ENCODE measurements at regions of chr5 and their contacts with region 1.

Region 1: DNA sequence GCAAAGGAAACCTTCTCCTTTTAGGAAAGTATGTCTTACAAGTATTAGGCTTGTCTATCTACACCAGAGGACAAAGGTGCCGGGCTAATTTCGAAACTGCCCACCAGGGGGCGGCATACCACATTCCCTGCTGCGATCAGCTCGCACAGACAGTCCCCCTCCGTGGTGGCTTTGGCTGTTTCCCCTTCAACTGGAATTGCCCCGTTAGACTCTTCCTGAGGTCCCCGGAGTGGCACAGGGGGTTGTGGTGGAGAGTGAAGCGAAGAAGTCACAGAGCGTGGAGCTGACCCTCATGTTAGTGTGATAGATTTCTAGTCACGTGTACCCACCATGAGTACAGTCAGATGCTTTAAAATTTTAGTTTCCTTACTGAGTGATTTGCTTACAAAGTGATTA is 17.5 kb downstream of the PTTG1 start:
- DNase-seq: peak; percentile 86 to 90 (median 87)
- H3K4me3 ChIP-seq: peak overlapping the region; percentile 5 to 94 (median 71)
- H3K27ac ChIP-seq: peak overlapping the region; percentile 18 to 55
- H3K4me1 ChIP-seq: peaks cover 10 to 34% (median 31%) of the 10 kb centered on the region in 4 experiments
- H3K27me3 ChIP-seq: no peaks in the 10 kb centered on the region

Region 2: DNA sequence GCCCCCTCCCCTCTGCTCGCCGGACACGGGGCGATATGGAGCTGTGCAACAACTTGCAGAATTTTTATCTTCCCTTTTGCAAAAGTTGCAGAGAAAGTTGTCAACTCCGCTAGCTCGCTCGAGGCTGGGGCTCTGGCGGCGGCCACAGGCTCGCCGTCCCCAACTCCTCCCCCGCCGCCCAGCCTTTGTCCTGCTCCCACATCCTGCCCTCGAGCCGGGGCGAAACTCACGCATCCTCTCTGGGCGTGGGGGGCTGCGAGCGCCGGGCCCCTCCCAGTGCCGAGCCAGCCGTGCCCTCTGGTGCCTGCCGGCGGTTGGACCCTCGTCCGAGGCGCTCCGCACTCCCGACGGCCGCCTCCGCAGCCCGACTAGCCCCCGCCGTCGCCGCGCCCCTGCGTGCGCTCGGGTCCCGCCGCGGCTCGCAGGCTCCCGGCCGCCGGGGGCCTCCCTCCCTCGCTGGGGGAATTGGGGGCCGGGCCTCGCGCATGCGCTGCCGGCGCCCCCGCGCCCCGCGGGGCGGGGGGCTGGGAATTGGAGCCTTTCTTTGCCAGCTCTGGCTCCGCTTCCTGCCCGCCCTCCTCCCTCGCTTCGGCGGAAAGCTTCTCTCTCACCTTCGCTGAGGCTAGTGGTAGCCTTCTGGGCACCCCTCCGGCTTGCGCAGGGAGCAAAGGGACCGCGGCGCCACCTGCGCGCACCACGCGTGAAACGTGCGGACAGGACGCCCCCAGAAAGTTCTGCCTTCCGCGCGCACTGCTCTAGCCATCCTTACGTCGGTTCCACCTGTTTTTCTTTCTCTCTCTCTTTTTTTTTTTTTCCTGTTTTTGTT is 126.9 kb before region 1 on chr5 and contains the start of gene CCNJL:
- CTCF ChIA-PET with region 1: no interaction called
- POLR2A ChIA-PET with region 1: no interaction called
- DNase-seq: peak; percentile 19 to 57 (median 49)
- H3K4me3 ChIP-seq: peak within 1 kb of the TSS; percentile 49 to 78 (median 67)
- H3K27ac ChIP-seq: no peak within 1 kb of the TSS
- H3K4me1 ChIP-seq: peaks cover 7 to 38% (median 19%) of the 10 kb centered on the region in 4 experiments
- H3K27me3 ChIP-seq: peaks cover 0 to 55% (median 21%) of the 10 kb centered on the region in 5 experiments

Region 3: GRCh38 chr5:160418561-160419457 is 20.4 kb before region 1 on chr5 and contains the start of gene SLU7:
- CTCF ChIA-PET with region 1: interaction called, 39 read pairs
- POLR2A ChIA-PET with region 1: no interaction called
- DNase-seq: peak; percentile 98 to 99 (median 99)
- H3K4me3 ChIP-seq: peak within 1 kb of the TSS; percentile 65 to 99 (median 96)
- H3K27ac ChIP-seq: peak within 1 kb of the TSS; percentile 95 to 98
- H3K4me1 ChIP-seq: peaks cover 26 to 54% (median 44%) of the 10 kb centered on the region in 4 experiments
- H3K27me3 ChIP-seq: no peaks in the 10 kb centered on the region

Region 4: DNA sequence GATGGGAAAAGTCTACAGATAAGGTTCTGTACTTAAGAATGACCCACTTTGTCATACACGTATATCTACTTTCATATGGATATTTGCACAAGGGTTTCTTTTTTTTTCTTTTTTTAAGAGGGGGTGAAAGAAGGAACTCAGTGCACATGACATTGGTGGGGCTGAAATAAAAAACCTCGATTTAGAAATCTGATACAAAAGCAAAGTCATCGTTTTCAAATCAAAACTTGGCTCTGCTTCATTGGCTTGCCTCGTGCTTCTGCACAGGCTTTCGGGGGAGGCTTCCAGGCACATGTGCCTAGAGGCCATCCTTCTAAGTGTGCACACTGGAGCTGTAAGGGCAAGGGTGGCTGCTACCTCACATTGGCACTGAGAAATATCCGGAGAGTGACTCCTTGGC is 13.6 kb after region 1 on chr5:
- CTCF ChIA-PET with region 1: interaction called, 75 read pairs
- POLR2A ChIA-PET with region 1: no interaction called
- DNase-seq: no peak
- H3K4me3 ChIP-seq: no peak overlapping the region
- H3K27ac ChIP-seq: no peak overlapping the region
- H3K4me1 ChIP-seq: peaks cover 3 to 30% (median 21%) of the 10 kb centered on the region in 4 experiments
- H3K27me3 ChIP-seq: no peaks in the 10 kb centered on the region

Region 5: DNA sequence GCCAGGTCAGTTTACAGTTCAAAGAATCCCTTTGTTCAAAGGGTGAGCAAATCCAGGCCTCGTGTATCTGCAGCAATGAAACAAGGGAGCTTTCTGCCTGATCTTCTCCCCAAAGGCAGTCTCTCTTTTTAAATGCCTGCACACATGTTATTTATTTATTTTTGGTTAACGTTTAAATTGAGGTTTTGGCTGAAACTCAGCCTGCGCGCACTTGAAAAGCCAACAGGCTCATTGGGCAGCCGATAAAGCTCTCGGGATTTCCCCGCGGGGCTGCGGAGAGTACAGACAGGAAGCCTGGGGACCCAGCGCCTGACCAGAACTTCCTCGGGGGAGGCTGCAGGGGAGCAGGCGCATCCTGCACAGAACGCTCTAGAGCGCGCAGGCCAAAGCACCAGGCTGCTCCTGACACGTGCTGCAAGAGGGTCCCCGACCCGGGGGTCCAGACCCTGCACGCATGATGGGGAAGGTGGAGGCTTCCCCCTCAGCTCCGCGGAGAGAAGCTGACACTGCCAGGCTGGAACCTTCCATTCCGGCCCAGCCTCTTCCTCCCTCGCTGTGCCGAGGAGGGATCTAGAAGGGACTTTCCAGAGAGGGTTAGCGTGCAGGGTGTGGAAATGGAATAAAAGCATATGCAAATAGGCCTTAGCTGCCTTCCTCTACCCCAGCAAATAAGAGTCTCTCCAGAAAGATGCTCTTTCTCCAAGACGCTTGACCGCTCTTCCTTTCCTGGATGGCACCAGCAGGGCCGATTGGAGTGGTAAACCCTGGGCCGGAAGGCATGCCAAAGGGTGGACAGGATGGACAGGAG is 28.6 kb after region 1 on chr5:
- CTCF ChIA-PET with region 1: interaction called, 115 read pairs
- POLR2A ChIA-PET with region 1: interaction called, 26 read pairs
- DNase-seq: peak; percentile 97 to 100 (median 99)
- H3K4me3 ChIP-seq: peak overlapping the region; percentile 15 to 97 (median 77)
- H3K27ac ChIP-seq: peak overlapping the region; percentile 93 to 94
- H3K4me1 ChIP-seq: peaks cover 39 to 84% (median 72%) of the 10 kb centered on the region in 4 experiments
- H3K27me3 ChIP-seq: no peaks in the 10 kb centered on the region

Region 6: DNA sequence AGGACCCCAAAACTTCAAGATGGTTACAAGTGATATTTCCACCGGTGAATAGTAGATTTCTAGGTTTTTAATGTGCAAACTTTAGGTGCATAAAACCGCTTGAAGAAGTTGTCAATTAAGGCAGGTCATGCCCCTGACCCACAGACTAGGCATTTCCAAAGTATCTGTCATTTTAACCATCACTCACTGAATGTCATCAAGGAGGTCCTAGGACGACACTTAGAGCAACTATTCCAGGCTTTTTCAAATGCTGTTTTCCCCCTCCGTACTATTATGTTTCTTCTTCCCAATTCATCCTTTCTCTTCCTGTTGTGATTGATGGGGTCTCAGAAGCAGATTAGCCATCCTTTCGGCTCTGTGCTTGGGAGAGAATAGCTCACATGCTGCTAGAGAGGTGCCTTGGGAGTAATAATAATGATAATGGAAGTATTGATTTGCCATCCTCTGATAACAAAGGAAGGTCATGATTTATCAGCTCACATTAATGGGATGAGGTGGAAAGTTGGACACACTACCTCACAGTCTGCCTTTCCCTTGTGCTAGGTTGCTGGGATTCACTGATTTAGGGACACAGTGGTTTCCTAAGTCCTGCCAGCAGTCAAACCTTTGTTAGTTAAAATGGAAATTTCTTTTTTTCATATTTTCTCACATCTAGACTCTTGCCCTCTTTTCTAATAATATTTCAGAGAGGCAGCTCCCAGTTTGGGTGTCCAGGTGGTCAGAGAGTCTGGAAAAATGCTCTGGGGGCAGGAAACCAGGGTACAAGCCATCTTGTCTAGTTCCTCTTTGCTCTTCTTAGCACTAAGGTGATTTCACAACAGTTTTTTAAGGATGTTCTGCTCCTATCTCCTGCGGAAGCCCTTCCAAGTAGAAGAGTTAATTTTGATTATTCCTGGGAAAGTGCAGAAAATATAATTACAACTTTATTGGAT is 49.5 kb after region 1 on chr5:
- CTCF ChIA-PET with region 1: interaction called, 22 read pairs
- POLR2A ChIA-PET with region 1: no interaction called
- DNase-seq: no peak
- H3K4me3 ChIP-seq: no peak overlapping the region
- H3K27ac ChIP-seq: no peak overlapping the region
- H3K4me1 ChIP-seq: peaks cover 8 to 32% (median 24%) of the 10 kb centered on the region in 4 experiments
- H3K27me3 ChIP-seq: no peaks in the 10 kb centered on the region

Region 7: DNA sequence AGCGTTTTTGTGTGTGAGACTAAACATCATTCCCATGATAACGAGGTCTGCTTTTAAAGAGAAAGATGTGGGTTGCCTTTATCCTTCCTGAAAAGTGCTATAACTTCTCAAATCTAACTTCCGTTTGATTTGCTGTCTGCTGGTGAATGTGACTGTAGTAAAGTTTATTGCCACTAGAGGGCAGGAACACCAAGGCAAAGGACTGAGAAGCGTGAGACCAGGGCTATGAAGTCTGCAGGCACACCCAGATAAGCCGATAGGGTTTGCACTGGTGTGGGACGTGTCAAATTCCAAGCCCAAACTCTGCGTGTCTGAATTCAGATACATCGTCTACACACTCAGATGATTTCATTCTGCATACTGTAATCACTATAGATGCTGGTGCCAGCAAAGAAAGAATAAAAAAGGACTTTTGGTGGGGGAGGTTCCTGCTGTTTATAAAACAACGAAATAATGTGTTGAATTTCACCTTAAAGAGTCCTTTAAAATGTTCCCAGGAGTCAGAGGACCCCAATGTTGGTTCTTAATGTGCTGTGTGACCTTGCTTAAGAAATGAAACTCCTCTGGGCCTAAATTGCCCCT is 69.7 kb after region 1 on chr5:
- CTCF ChIA-PET with region 1: interaction called, 156 read pairs
- POLR2A ChIA-PET with region 1: interaction called, 7 read pairs
- DNase-seq: peak; percentile 90 to 94 (median 91)
- H3K4me3 ChIP-seq: peak overlapping the region in 1 of 7 experiments; percentile 30
- H3K27ac ChIP-seq: no peak overlapping the region
- H3K4me1 ChIP-seq: peaks cover 6 to 39% (median 30%) of the 10 kb centered on the region in 4 experiments
- H3K27me3 ChIP-seq: peaks cover 0 to 4% (median 0%) of the 10 kb centered on the region in 5 experiments

Measured in common myeloid progenitor, CD34-positive (primary cell).